Activated CD8-positive, alpha-beta T cell treated with anti-CD3 and anti-CD28 coated beads for 36 hours (primary cell): ENCODE measurements at regions of chrX and their contacts with region 1.

Region 1: DNA sequence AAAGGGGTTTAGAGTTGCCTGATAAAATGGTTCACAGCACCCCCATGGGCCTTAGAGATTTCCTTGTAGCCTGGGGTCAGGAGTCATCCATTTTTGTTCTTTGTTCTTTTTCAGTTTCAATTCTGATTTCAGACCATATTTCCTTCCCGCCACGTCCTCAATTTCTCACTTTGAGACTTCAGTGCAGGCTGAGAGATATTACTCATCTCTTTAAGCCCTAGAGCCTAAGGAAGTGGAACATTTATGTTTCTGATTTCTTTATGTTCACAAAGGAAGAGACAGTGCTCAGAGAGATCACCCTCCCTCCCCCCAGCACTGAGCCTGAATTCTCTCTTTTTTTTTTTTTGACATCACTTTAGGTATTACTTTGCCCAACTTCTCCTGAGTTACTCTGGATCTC is 56.3 kb downstream of the MSN start:
- DNase-seq: peak; percentile 63
- ATAC-seq: peak; percentile 88
- H3K4me3 Mint-ChIP-seq: peak overlapping the region; percentile 38
- H3K27ac Mint-ChIP-seq: peak overlapping the region; percentile 94
- H3K4me1 Mint-ChIP-seq: peaks cover 86% of the 10 kb centered on the region
- H3K27me3 Mint-ChIP-seq: no peaks in the 10 kb centered on the region
- CTCF ChIP-seq: no peak

Region 2: GRCh38 chrX:65581661-65582339 is 141.9 kb before region 1 on chrX:
- CTCF ChIA-PET with region 1: no interaction called
- POLR2A ChIA-PET with region 1: no interaction called
- intact Hi-C with region 1: no loop called
- DNase-seq: peak; percentile 66
- ATAC-seq: peak; percentile 67
- H3K4me3 Mint-ChIP-seq: no peak overlapping the region
- H3K27ac Mint-ChIP-seq: no peak overlapping the region
- H3K4me1 Mint-ChIP-seq: peaks cover 7% of the 10 kb centered on the region
- H3K27me3 Mint-ChIP-seq: no peaks in the 10 kb centered on the region
- CTCF ChIP-seq: peak; percentile 73

Region 3: DNA sequence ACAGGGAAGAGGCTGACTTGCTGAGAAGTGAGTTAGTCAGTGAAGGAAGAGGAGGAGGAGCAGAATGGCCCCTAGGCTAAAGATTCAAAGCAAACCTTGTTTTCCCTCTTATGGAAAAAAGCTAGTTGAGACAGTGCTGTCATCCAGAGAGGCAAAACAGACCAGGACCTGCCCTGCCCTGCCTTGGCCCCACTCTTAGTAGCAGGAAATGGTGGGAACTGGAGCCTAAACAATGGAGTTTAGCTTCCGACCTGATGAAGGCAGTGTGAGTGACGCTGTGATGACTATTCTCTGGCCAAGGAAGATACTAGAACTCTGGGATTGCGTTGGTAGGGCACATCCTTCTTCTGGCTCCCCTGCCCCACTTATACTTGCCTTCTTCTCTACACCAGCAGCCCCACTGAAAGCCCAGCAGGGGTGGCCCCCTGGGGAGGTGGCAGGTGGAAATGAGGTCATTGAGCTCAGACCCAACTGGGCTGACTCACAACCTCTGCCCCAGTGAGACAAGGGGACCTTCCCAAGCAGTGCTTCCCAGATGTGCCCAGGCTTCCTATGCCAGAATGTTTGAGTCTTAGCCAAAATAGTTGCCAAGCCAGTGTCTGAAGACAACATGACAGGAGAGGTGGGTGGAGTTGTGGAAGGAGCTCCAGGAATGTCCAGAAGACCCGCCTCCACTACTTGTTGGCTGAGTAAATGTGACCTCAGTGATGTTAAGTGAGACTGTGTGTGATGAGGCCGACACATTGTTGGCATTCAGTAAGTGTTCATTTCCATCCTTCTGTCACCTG is 17.5 kb before region 1 on chrX:
- CTCF ChIA-PET with region 1: interaction called, 6 read pairs
- POLR2A ChIA-PET with region 1: interaction called, 19 read pairs
- intact Hi-C with region 1: no loop called
- DNase-seq: peak; percentile 79
- ATAC-seq: peak; percentile 89
- H3K4me3 Mint-ChIP-seq: peak overlapping the region; percentile 36
- H3K27ac Mint-ChIP-seq: peak overlapping the region; percentile 97
- H3K4me1 Mint-ChIP-seq: peaks cover 65% of the 10 kb centered on the region
- H3K27me3 Mint-ChIP-seq: no peaks in the 10 kb centered on the region
- CTCF ChIP-seq: no peak